Right ventricle myocardium superior (tissue), 1 donor: ENCODE measurements at regions of chr12 and their contacts with region 1.

Region 1: DNA sequence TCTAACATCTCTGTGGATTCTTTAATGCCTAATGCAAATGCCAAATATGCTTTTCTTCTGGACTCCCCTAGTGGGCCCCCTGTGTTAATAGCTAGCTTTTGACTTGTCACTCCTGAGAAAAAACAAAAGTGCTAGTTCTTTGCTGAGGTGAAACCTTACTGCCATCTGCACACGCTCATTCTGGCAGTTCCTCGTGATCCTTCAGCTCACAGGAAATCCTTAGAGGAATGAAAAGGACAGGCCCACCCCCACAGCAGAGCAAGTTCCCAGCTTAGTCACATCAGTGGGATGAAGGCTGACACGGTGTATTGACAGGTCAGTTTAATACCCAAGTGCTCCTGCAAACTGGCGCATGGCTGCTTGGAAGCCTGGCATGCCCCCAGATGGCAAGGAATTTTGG is 165.1 kb upstream of the ATP2B1 start:
- DNase-seq: no peak
- ATAC-seq: peak; percentile 31

Region 2: GRCh38 chr12:89451841-89452251 is 421.9 kb before region 1 on chr12:
- intact Hi-C with region 1: no loop called
- DNase-seq: peak; percentile 55
- ATAC-seq: peak; percentile 66

Region 3: GRCh38 chr12:89695100-89695499 is 178.6 kb before region 1 on chr12:
- intact Hi-C with region 1: no loop called
- DNase-seq: no peak
- ATAC-seq: no peak

Region 4: GRCh38 chr12:89768586-89769486 is 104.9 kb before region 1 on chr12:
- intact Hi-C with region 1: loop called (anchors 10 kb)
- DNase-seq: no peak
- ATAC-seq: no peak